ENCODE measurements at regions of chrX and their contacts with region 1.

Region 1: GRCh38 chrX:76172325-76172893 is 453 bp upstream of the PBDC1 start:
- DNase-seq: no peak
- ATAC-seq: peak; percentile 51
- H3K4me3 ChIP-seq: peak overlapping the region; percentile 70 to 71
- H3K4me3 Mint-ChIP-seq: peak overlapping the region; percentile 94
- H3K27ac ChIP-seq: peak overlapping the region; percentile 81 to 90
- H3K27ac Mint-ChIP-seq: peak overlapping the region; percentile 98
- H3K4me1 ChIP-seq: peaks cover 32% of the 10 kb centered on the region
- H3K4me1 Mint-ChIP-seq: peaks cover 57% of the 10 kb centered on the region
- H3K27me3 ChIP-seq: no peaks in the 10 kb centered on the region
- H3K27me3 Mint-ChIP-seq: no peaks in the 10 kb centered on the region
- CTCF ChIP-seq: no peak

Region 2: GRCh38 chrX:75156021-75156945 is 1016.1 kb before region 1 on chrX and contains the start of gene ABCB7:
- CTCF ChIA-PET with region 1: no interaction called
- POLR2A ChIA-PET with region 1: no interaction called
- intact Hi-C with region 1: loop called in 1 of 2 experiments (anchors 10 kb)
- DNase-seq: peak; percentile 19 to 83 (median 63)
- ATAC-seq: peak; percentile 91
- H3K4me3 ChIP-seq: peak within 1 kb of the TSS; percentile 87 to 96
- H3K4me3 Mint-ChIP-seq: peak within 1 kb of the TSS; percentile 94
- H3K27ac ChIP-seq: peak within 1 kb of the TSS; percentile 77 to 80
- H3K27ac Mint-ChIP-seq: peak within 1 kb of the TSS; percentile 98
- H3K4me1 ChIP-seq: peaks cover 17% of the 10 kb centered on the region
- H3K4me1 Mint-ChIP-seq: peaks cover 49% of the 10 kb centered on the region
- H3K27me3 ChIP-seq: no peaks in the 10 kb centered on the region
- H3K27me3 Mint-ChIP-seq: no peaks in the 10 kb centered on the region
- CTCF ChIP-seq: no peak
- total RNA-seq, gene ABCB7: 16.6 to 17.3 TPM

Region 3: GRCh38 chrX:75229774-75230173 is 942.6 kb before region 1 on chrX:
- CTCF ChIA-PET with region 1: no interaction called
- POLR2A ChIA-PET with region 1: no interaction called
- intact Hi-C with region 1: no loop called
- DNase-seq: no peak
- ATAC-seq: no peak
- H3K4me3 ChIP-seq: no peak overlapping the region
- H3K4me3 Mint-ChIP-seq: no peak overlapping the region
- H3K27ac ChIP-seq: no peak overlapping the region
- H3K27ac Mint-ChIP-seq: no peak overlapping the region
- H3K4me1 ChIP-seq: no peaks in the 10 kb centered on the region
- H3K4me1 Mint-ChIP-seq: peaks cover 1% of the 10 kb centered on the region
- H3K27me3 ChIP-seq: no peaks in the 10 kb centered on the region
- H3K27me3 Mint-ChIP-seq: no peaks in the 10 kb centered on the region
- CTCF ChIP-seq: no peak

Region 4: GRCh38 chrX:75273483-75273882 is 898.9 kb before region 1 on chrX:
- CTCF ChIA-PET with region 1: no interaction called
- POLR2A ChIA-PET with region 1: no interaction called
- intact Hi-C with region 1: loop called in 1 of 2 experiments (anchors 10 kb)
- DNase-seq: peak in 1 of 9 experiments; percentile 5
- ATAC-seq: peak; percentile 43
- H3K4me3 ChIP-seq: peak overlapping the region; percentile 75 to 88
- H3K4me3 Mint-ChIP-seq: peak overlapping the region; percentile 92
- H3K27ac ChIP-seq: peak overlapping the region; percentile 89 to 90
- H3K27ac Mint-ChIP-seq: peak overlapping the region; percentile 96
- H3K4me1 ChIP-seq: peaks cover 18% of the 10 kb centered on the region
- H3K4me1 Mint-ChIP-seq: peaks cover 44% of the 10 kb centered on the region
- H3K27me3 ChIP-seq: no peaks in the 10 kb centered on the region
- H3K27me3 Mint-ChIP-seq: no peaks in the 10 kb centered on the region
- CTCF ChIP-seq: no peak

Region 5: DNA sequence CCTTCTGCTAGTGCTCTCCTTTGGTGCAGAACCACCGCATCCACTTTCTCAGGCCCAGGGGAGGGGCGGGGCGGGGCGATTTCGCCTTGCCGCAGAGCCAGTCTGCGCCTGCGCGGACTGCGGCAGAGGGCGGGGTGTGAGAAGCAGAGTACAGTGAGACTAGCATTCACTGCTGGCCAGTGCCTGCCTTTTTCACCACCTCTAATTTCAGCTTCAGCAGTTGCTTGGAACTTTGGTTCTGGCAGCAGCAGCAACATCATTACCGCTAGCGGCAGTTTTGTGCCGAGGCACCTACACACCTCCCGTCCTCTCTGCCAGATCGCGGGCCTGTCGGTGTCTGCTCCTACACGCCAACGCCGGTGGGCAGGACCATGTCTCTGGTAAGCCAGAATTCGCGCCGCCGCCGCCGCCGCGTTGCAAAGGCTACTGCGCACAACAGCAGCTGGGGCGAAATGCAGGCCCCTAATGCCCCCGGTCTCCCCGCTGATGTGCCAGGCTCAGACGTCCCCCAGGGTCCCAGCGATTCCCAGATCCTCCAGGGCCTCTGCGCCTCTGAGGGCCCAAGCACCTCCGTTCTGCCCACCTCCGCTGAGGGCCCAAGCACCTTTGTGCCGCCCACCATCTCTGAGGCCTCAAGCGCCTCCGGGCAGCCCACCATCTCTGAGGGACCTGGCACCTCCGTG is 255.3 kb after region 1 on chrX and contains the start of gene MAGEE1:
- CTCF ChIA-PET with region 1: no interaction called
- POLR2A ChIA-PET with region 1: no interaction called
- intact Hi-C with region 1: loop called (anchors 5 kb)
- DNase-seq: peak; percentile 73 to 89 (median 80)
- ATAC-seq: peak; percentile 72
- H3K4me3 ChIP-seq: peak within 1 kb of the TSS; percentile 74 to 85
- H3K4me3 Mint-ChIP-seq: peak within 1 kb of the TSS; percentile 91
- H3K27ac ChIP-seq: peak within 1 kb of the TSS; percentile 80 to 89
- H3K27ac Mint-ChIP-seq: peak within 1 kb of the TSS; percentile 93
- H3K4me1 ChIP-seq: peaks cover 30% of the 10 kb centered on the region
- H3K4me1 Mint-ChIP-seq: peaks cover 37% of the 10 kb centered on the region
- H3K27me3 ChIP-seq: no peaks in the 10 kb centered on the region
- H3K27me3 Mint-ChIP-seq: no peaks in the 10 kb centered on the region
- CTCF ChIP-seq: no peak
- total RNA-seq, gene MAGEE1: 11.4 to 14.1 TPM

Measured in CD8-positive, alpha-beta T cell (primary cell).